CD8-positive, alpha-beta T cell (primary cell): ENCODE measurements at regions of chr9 and their contacts with region 1.

Region 1: GRCh38 chr9:26193237-26193636 is 515.0 kb upstream of the TUSC1 start:
- DNase-seq: no peak
- ATAC-seq: no peak
- H3K4me3 ChIP-seq: no peak overlapping the region
- H3K4me3 Mint-ChIP-seq: no peak overlapping the region
- H3K27ac ChIP-seq: no peak overlapping the region
- H3K27ac Mint-ChIP-seq: no peak overlapping the region
- H3K4me1 ChIP-seq: no peaks in the 10 kb centered on the region
- H3K4me1 Mint-ChIP-seq: no peaks in the 10 kb centered on the region
- H3K27me3 ChIP-seq: no peaks in the 10 kb centered on the region
- H3K27me3 Mint-ChIP-seq: no peaks in the 10 kb centered on the region
- CTCF ChIP-seq: no peak

Region 2: GRCh38 chr9:26148128-26148527 is 45.1 kb before region 1 on chr9:
- CTCF ChIA-PET with region 1: no interaction called
- POLR2A ChIA-PET with region 1: no interaction called
- intact Hi-C with region 1: loop called in 1 of 2 experiments (anchors 5 kb)
- DNase-seq: no peak
- ATAC-seq: no peak
- H3K4me3 ChIP-seq: no peak overlapping the region
- H3K4me3 Mint-ChIP-seq: no peak overlapping the region
- H3K27ac ChIP-seq: no peak overlapping the region
- H3K27ac Mint-ChIP-seq: no peak overlapping the region
- H3K4me1 ChIP-seq: no peaks in the 10 kb centered on the region
- H3K4me1 Mint-ChIP-seq: no peaks in the 10 kb centered on the region
- H3K27me3 ChIP-seq: no peaks in the 10 kb centered on the region
- H3K27me3 Mint-ChIP-seq: no peaks in the 10 kb centered on the region
- CTCF ChIP-seq: no peak